Naive thymus-derived CD4-positive, alpha-beta T cell (primary cell): ENCODE measurements at regions of chr2 and their contacts with region 1.

Region 1: GRCh38 chr2:241637000-241637791 is at the starts of genes ATG4B and THAP4:
- DNase-seq: peak; percentile 61 to 89 (median 79)
- ATAC-seq: peak; percentile 82
- H3K4me3 ChIP-seq: peak within 1 kb of the TSS; percentile 99
- H3K4me3 Mint-ChIP-seq: peak within 1 kb of the TSS; percentile 85 to 98 (median 92)
- H3K27ac ChIP-seq: peak within 1 kb of the TSS; percentile 99
- H3K27ac Mint-ChIP-seq: peak within 1 kb of the TSS; percentile 48 to 98 (median 94)
- H3K4me1 ChIP-seq: peaks cover 26 to 27% of the 10 kb centered on the region in 2 donors
- H3K4me1 Mint-ChIP-seq: peaks cover 43 to 63% (median 55%) of the 10 kb centered on the region in 7 donors
- H3K27me3 ChIP-seq: no peaks in the 10 kb centered on the region
- H3K27me3 Mint-ChIP-seq: no peaks in the 10 kb centered on the region
- total RNA-seq, gene ATG4B: 87.2 to 131 (median 95.0) TPM
- total RNA-seq, gene THAP4: 26.4 to 34.8 (median 28.1) TPM

Region 2: GRCh38 chr2:240586198-240586918 is 1050.8 kb before region 1 on chr2 and contains the start of gene CAPN10:
- CTCF ChIA-PET with region 1: no interaction called
- POLR2A ChIA-PET with region 1: interaction called, 4 read pairs
- intact Hi-C with region 1: loop called in 1 of 2 experiments (anchors 5 kb)
- DNase-seq: peak; percentile 93 to 98 (median 97)
- ATAC-seq: peak; percentile 92
- H3K4me3 ChIP-seq: peak within 1 kb of the TSS; percentile 89
- H3K4me3 Mint-ChIP-seq: peak within 1 kb of the TSS; percentile 82 to 97 (median 94)
- H3K27ac ChIP-seq: peak within 1 kb of the TSS; percentile 94
- H3K27ac Mint-ChIP-seq: peak within 1 kb of the TSS; percentile 90 to 97 (median 92)
- H3K4me1 ChIP-seq: peaks cover 30 to 33% of the 10 kb centered on the region in 2 donors
- H3K4me1 Mint-ChIP-seq: peaks cover 31 to 69% (median 56%) of the 10 kb centered on the region in 7 donors
- H3K27me3 ChIP-seq: no peaks in the 10 kb centered on the region
- H3K27me3 Mint-ChIP-seq: no peaks in the 10 kb centered on the region
- total RNA-seq, gene CAPN10: 54.1 to 74.8 (median 64.5) TPM

Region 3: GRCh38 chr2:241135737-241136136 is 501.5 kb before region 1 on chr2:
- CTCF ChIA-PET with region 1: no interaction called
- POLR2A ChIA-PET with region 1: no interaction called
- intact Hi-C with region 1: no loop called
- DNase-seq: no peak
- ATAC-seq: no peak
- H3K4me3 ChIP-seq: no peak overlapping the region
- H3K4me3 Mint-ChIP-seq: no peak overlapping the region
- H3K27ac ChIP-seq: no peak overlapping the region
- H3K27ac Mint-ChIP-seq: no peak overlapping the region
- H3K4me1 ChIP-seq: no peaks in the 10 kb centered on the region
- H3K4me1 Mint-ChIP-seq: no peaks in the 10 kb centered on the region
- H3K27me3 ChIP-seq: no peaks in the 10 kb centered on the region
- H3K27me3 Mint-ChIP-seq: no peaks in the 10 kb centered on the region

Region 4: GRCh38 chr2:241355983-241356870 is 281.0 kb before region 1 on chr2 and contains the start of gene FARP2:
- CTCF ChIA-PET with region 1: no interaction called
- POLR2A ChIA-PET with region 1: no interaction called
- intact Hi-C with region 1: loop called (anchors 1 kb)
- DNase-seq: peak; percentile 91 to 99 (median 97)
- ATAC-seq: peak; percentile 93
- H3K4me3 ChIP-seq: peak within 1 kb of the TSS; percentile 54
- H3K4me3 Mint-ChIP-seq: peak within 1 kb of the TSS; percentile 75 to 92 (median 85)
- H3K27ac ChIP-seq: peak within 1 kb of the TSS; percentile 72
- H3K27ac Mint-ChIP-seq: peak within 1 kb of the TSS in 8 of 9 donors; percentile 80 to 95 (median 90)
- H3K4me1 ChIP-seq: peaks cover 6 to 7% of the 10 kb centered on the region in 2 donors
- H3K4me1 Mint-ChIP-seq: peaks cover 5 to 34% (median 19%) of the 10 kb centered on the region in 7 donors
- H3K27me3 ChIP-seq: no peaks in the 10 kb centered on the region
- H3K27me3 Mint-ChIP-seq: no peaks in the 10 kb centered on the region
- total RNA-seq, gene FARP2: 12.4 to 31.0 (median 22.1) TPM

Region 5: GRCh38 chr2:241617431-241618154 is 19.6 kb before region 1 on chr2:
- CTCF ChIA-PET with region 1: no interaction called
- POLR2A ChIA-PET with region 1: interaction called, 13 read pairs
- intact Hi-C with region 1: loop called (anchors 1 kb)
- DNase-seq: peak in 8 of 9 donors; percentile 41 to 71 (median 60)
- ATAC-seq: peak; percentile 77
- H3K4me3 ChIP-seq: peak overlapping the region; percentile 68
- H3K4me3 Mint-ChIP-seq: peak overlapping the region; percentile 79 to 96 (median 91)
- H3K27ac ChIP-seq: peak overlapping the region; percentile 75
- H3K27ac Mint-ChIP-seq: peak overlapping the region; percentile 85 to 98 (median 94)
- H3K4me1 ChIP-seq: peaks cover 13 to 18% of the 10 kb centered on the region in 2 donors
- H3K4me1 Mint-ChIP-seq: peaks cover 23 to 49% (median 43%) of the 10 kb centered on the region in 7 donors
- H3K27me3 ChIP-seq: no peaks in the 10 kb centered on the region
- H3K27me3 Mint-ChIP-seq: no peaks in the 10 kb centered on the region

Region 6: GRCh38 chr2:241702132-241703031 is 65.2 kb after region 1 on chr2:
- CTCF ChIA-PET with region 1: no interaction called
- POLR2A ChIA-PET with region 1: interaction called, 3 read pairs
- intact Hi-C with region 1: loop called (anchors 1 kb)
- DNase-seq: peak; percentile 83 to 92 (median 89)
- ATAC-seq: peak; percentile 89
- H3K4me3 ChIP-seq: peak overlapping the region; percentile 74
- H3K4me3 Mint-ChIP-seq: peak overlapping the region; percentile 74 to 89 (median 84)
- H3K27ac ChIP-seq: peak overlapping the region; percentile 75
- H3K27ac Mint-ChIP-seq: peak overlapping the region; percentile 75 to 87 (median 82)
- H3K4me1 ChIP-seq: peaks cover 7 to 12% of the 10 kb centered on the region in 2 donors
- H3K4me1 Mint-ChIP-seq: peaks cover 11 to 38% (median 26%) of the 10 kb centered on the region in 7 donors
- H3K27me3 ChIP-seq: no peaks in the 10 kb centered on the region
- H3K27me3 Mint-ChIP-seq: no peaks in the 10 kb centered on the region